ENCODE measurements at regions of chrX and their contacts with region 1.

Region 1: DNA sequence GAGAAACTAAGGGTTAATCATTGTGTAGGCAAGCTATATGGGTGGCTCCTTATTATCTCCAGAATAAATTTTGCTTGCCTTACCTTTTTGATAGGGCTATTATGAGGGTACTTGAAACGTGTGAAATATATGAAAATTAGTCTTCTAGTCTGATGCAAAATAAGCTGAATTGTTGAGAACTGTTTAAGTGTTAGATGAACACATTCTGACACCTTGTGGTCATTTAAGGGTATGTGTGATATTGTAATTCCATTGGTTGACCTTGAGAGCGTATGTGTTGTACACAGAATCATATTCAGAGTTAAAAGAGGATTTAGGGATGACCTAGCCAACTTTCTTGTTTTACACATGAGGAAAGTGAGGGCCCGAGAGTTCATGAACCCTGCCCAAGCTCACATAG is 44.6 kb upstream of the LINC00632 start:
- H3K4me3 ChIP-seq: no peak overlapping the region
- H3K27ac ChIP-seq: no peak overlapping the region
- H3K4me1 ChIP-seq: no peaks in the 10 kb centered on the region
- CTCF ChIP-seq: peak; percentile 53; the same call in 1 of the 2 replicates

Region 2: GRCh38 chrX:140050906-140051305 is 614.0 kb before region 1 on chrX:
- CTCF ChIA-PET with region 1: interaction called, 17 read pairs
- POLR2A ChIA-PET with region 1: no interaction called
- H3K4me3 ChIP-seq: no peak overlapping the region
- H3K27ac ChIP-seq: no peak overlapping the region
- H3K4me1 ChIP-seq: no peaks in the 10 kb centered on the region
- CTCF ChIP-seq: no peak

Region 3: GRCh38 chrX:140057001-140057411 is 607.9 kb before region 1 on chrX:
- CTCF ChIA-PET with region 1: interaction called, 15 read pairs
- POLR2A ChIA-PET with region 1: no interaction called
- H3K4me3 ChIP-seq: no peak overlapping the region
- H3K27ac ChIP-seq: no peak overlapping the region
- H3K4me1 ChIP-seq: no peaks in the 10 kb centered on the region
- CTCF ChIP-seq: peak; percentile 86

Region 4: GRCh38 chrX:140149761-140150160 is 515.2 kb before region 1 on chrX:
- CTCF ChIA-PET with region 1: interaction called, 11 read pairs
- POLR2A ChIA-PET with region 1: no interaction called
- H3K4me3 ChIP-seq: no peak overlapping the region
- H3K27ac ChIP-seq: no peak overlapping the region
- H3K4me1 ChIP-seq: no peaks in the 10 kb centered on the region
- CTCF ChIP-seq: no peak

Region 5: DNA sequence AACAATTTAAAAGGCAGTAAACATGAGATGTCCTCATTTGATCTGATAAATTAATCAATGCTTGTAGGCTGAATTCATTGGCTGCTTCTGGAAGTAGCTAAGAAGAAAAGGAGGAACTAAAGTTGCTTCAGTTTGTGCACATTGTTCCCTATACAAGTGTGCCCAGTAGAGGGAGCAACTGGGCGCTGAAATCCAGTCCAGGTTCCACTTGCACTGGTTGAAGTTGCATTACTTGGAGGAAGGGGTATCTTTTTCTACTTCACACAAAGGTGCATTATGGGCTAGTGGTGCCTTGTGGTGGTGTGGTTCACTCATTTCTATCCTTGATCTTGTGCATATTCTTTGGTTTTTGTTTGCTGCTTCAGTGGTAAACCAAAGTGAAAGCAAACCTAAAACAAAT is 92.2 kb before region 1 on chrX:
- CTCF ChIA-PET with region 1: interaction called, 19 read pairs
- POLR2A ChIA-PET with region 1: no interaction called
- H3K4me3 ChIP-seq: no peak overlapping the region
- H3K27ac ChIP-seq: no peak overlapping the region
- H3K4me1 ChIP-seq: no peaks in the 10 kb centered on the region
- CTCF ChIP-seq: peak; percentile 62